Aorta (tissue), 5 donors: ENCODE measurements at regions of chr13 and their contacts with region 1.

Region 1: GRCh38 chr13:19782049-19782726 is 557 bp downstream of the PSPC1 start:
- DNase-seq: peak; percentile 79 to 86
- ATAC-seq: peak; percentile 87
- H3K4me3 ChIP-seq: peak overlapping the region; percentile 81 to 87
- H3K27ac ChIP-seq: peak overlapping the region; percentile 65 to 94
- H3K4me1 ChIP-seq: no peaks in the 10 kb centered on the region
- H3K27me3 ChIP-seq: no peaks in the 10 kb centered on the region

Region 2: GRCh38 chr13:19633479-19634255 is 148.5 kb before region 1 on chr13 and contains the start of gene MPHOSPH8:
- intact Hi-C with region 1: loop called in 1 of 2 experiments (anchors 5 kb)
- DNase-seq: peak; percentile 95 to 97
- ATAC-seq: peak; percentile 100
- H3K4me3 ChIP-seq: peak within 1 kb of the TSS; percentile 91 to 93
- H3K27ac ChIP-seq: peak within 1 kb of the TSS; percentile 59 to 92
- H3K4me1 ChIP-seq: no peaks in the 10 kb centered on the region
- H3K27me3 ChIP-seq: no peaks in the 10 kb centered on the region
- total RNA-seq, gene MPHOSPH8: 35.7 to 46.5 TPM

Region 3: DNA sequence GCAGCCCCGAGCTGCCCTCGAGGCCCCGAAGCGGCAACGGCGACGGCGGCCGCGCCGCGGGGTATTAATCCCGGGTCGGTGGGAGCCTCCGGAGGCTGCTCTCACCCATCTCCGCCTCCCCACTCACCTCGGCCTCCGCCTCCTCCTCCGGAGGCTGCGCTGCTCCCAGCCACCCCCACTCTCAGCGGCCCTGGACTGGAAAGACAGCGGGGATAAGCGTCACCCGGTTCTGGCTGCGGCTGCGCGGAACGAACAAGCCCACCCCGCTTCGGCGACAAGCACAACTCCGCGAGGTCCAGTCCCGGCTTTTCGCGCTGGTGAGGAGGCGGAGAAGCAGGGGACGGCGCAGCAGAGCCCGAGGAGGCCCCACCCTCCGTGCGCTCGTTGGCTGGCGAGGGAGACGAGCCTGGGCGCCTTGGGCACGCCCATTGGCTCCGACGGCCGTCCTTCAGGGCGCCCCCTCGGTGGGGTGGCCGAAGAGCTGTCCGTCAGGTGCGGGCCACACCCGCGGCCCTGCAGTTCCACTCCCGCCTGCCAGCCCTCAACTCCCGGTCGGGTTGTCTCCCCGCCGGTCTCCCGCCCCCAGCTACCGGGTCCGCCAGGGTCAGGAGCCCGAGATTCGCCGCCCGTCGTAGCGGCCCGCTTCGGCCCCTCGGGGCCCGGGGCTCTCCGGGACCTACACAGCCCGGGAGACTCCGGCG is 81.3 kb after region 1 on chr13 and contains the start of gene ZMYM5:
- intact Hi-C with region 1: loop called (anchors 5 to 10 kb)
- DNase-seq: peak; percentile 99 to 100
- ATAC-seq: peak; percentile 98
- H3K4me3 ChIP-seq: peak within 1 kb of the TSS; percentile 62 to 67
- H3K27ac ChIP-seq: peak within 1 kb of the TSS; percentile 83 to 94
- H3K4me1 ChIP-seq: peaks cover 0 to 2% of the 10 kb centered on the region in 2 donors
- H3K27me3 ChIP-seq: no peaks in the 10 kb centered on the region
- total RNA-seq, gene ZMYM5: 12.4 to 19.5 TPM

Region 4: GRCh38 chr13:19959831-19960652 is 177.9 kb after region 1 on chr13:
- intact Hi-C with region 1: loop called in 1 of 2 experiments (anchors 5 kb)
- DNase-seq: peak; percentile 90 to 92
- ATAC-seq: peak; percentile 78
- H3K4me3 ChIP-seq: peak overlapping the region; percentile 83 to 95
- H3K27ac ChIP-seq: peak overlapping the region in 1 of 2 donors; percentile 95
- H3K4me1 ChIP-seq: no peaks in the 10 kb centered on the region
- H3K27me3 ChIP-seq: no peaks in the 10 kb centered on the region